ENCODE measurements at regions of chr6 and their contacts with region 1.

Region 1: GRCh38 chr6:36759148-36759759 is 61.6 kb downstream of the RAB44 start:
- DNase-seq: peak; percentile 94
- H3K4me3 ChIP-seq: no peak overlapping the region
- H3K27ac ChIP-seq: no peak overlapping the region
- H3K4me1 ChIP-seq: peaks cover 3 to 18% (median 16%) of the 10 kb centered on the region in 4 donors
- H3K27me3 ChIP-seq: no peaks in the 10 kb centered on the region
- CTCF ChIP-seq: peak in 2 of 3 experiments; percentile 96
- EP300 ChIP-seq: no peak
- POLR2A ChIP-seq: no peak

Region 2: GRCh38 chr6:36685936-36686667 is 73.2 kb before region 1 on chr6:
- intact Hi-C with region 1: loop called (anchors 5 kb)
- DNase-seq: no peak
- H3K4me3 ChIP-seq: no peak overlapping the region
- H3K27ac ChIP-seq: peak overlapping the region in 3 of 4 donors; percentile 1 to 26 (median 12)
- H3K4me1 ChIP-seq: peaks cover 26 to 44% (median 38%) of the 10 kb centered on the region in 4 donors
- H3K27me3 ChIP-seq: no peaks in the 10 kb centered on the region
- CTCF ChIP-seq: no peak
- EP300 ChIP-seq: no peak
- POLR2A ChIP-seq: no peak

Region 3: GRCh38 chr6:36743538-36744303 is 15.5 kb before region 1 on chr6:
- intact Hi-C with region 1: no loop called
- DNase-seq: no peak
- H3K4me3 ChIP-seq: no peak overlapping the region
- H3K27ac ChIP-seq: no peak overlapping the region
- H3K4me1 ChIP-seq: no peaks in the 10 kb centered on the region
- H3K27me3 ChIP-seq: no peaks in the 10 kb centered on the region
- CTCF ChIP-seq: no peak
- EP300 ChIP-seq: no peak
- POLR2A ChIP-seq: no peak

Measured in esophagus muscularis mucosa (tissue), 4 donors.